ENCODE measurements at regions of chr2 and their contacts with region 1.

Region 1: DNA sequence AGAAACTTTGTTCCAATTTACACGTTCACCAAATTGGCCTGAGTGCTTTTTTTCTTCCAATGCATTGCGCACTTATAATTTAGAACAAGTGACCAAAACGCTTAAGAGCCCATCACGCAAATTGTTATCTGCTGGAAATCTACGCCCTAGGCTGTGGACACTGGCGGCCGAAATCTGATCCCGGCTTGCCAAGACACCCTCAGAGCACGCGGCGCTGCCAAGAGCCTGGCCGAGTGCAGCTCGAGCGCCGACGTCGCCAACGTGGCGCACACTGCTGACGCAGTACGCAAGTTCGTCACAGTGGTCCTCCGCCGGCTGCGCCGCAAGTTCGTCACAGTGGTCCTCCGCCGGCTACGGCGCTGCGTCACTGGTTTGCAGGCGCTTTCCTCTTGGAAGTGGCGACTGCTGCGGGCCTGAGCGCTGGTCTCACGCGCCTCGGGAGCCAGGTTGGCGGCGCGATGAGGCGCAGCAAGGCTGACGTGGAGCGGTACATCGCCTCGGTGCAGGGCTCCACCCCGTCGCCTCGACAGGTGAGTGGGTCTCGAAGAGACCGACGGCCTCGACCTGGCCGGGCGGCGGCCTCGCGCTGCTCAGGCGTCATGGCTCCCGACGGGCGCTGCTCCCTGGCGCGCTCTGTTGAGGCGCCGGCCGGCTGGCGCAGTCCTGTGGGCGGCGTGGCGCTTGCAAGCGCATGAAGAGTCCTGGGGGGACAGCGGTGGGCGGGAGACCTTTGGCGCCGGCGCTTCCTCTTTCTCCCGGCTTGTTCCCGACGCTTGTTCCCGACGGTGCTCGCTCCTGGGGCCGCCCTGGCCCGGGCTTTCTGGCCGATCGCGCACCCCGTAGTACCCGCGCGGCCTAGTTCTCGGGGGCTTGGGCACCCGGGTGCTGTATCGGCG is at the start of gene RANBP2:
- DNase-seq: peak; percentile 91
- H3K4me3 Mint-ChIP-seq: peak within 1 kb of the TSS; percentile 91
- H3K27ac Mint-ChIP-seq: peak within 1 kb of the TSS; percentile 99
- H3K4me1 Mint-ChIP-seq: peaks cover 12% of the 10 kb centered on the region
- H3K27me3 Mint-ChIP-seq: no peaks in the 10 kb centered on the region
- total RNA-seq, gene RANBP2: 70.0 and 72.4 TPM in 2 replicates

Region 2: DNA sequence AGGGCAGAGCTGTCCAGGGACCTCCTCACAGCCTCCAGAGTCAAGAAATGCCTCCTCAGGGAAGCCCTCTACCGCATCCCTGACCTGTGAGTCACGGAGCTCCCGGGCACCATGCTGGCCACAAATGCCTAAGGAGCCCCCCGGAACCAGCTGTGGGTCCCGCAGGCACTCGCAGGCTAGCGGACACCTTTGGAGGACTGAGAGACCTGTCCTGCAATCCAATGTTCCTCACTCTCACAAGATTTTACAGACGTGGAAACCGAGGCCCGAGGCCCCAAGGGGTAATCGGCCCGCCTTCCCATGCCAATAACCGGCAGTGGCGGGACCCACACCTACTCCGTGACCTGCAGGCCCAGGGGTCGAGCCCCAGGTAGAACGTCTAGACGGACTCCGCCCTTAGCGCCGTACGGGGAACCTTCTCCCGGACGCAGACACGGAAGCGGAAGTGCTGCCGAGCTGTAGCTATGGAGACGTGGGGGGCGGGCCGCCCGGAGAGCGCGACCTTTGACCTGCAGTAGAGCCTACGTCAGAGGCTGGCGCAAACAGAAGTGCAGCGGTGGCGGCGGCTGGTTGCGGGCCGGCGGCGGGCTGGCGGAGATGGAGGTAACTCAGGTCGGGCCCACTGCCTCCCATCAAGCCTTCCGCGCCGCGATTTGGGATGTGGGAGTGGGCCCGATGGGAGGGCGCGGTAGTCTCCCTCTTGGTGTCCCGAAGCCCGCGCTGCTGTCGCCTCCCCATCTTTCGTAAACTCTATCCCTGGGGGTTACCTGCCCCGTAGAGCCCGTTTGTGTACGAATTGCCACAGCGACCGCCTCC is 270.5 kb before region 1 on chr2 and contains the start of gene GCC2:
- intact Hi-C with region 1: loop called (anchors 1 kb)
- DNase-seq: peak; percentile 94
- H3K4me3 Mint-ChIP-seq: peak within 1 kb of the TSS; percentile 93
- H3K27ac Mint-ChIP-seq: peak within 1 kb of the TSS; percentile 95
- H3K4me1 Mint-ChIP-seq: peaks cover 39% of the 10 kb centered on the region
- H3K27me3 Mint-ChIP-seq: no peaks in the 10 kb centered on the region
- total RNA-seq, gene GCC2: 38.8 and 42.7 TPM in 2 replicates

Region 3: DNA sequence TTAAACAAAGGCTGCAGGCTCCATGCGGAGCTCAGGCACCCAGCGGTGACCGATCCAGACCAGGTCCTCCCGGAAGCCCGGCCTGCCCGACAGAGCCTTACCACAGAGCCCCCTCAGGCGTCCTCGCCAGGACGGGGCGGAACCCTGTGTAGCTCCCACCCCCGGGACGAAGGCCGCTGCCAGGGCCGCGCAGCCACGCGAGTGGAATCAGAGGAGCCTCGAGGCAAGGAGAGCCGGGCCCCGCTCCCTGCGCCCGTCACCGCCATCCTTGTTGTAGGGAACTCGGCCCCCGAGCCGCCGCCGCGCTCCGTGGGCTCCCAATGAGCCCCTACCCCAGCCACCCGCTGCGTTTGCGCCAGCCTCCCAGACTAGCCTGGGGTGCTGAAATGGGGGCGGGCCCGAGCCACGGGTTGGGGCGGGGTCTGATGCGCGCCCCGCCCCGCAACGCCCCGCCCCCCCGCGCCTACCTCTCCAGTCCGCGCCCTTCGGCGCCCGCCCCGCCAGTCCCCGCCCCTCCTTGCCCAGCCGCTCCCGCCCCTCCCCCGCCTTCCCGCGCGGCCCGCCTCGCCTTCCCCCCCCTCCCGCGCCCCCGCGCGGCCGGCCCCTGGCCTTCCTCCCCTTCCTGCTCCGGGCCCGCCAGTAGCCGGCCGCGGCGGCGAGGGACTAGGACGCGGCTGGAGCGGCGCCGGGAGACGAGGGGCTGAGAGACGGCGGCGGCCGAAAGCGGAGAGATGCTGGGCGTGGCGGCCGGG is 185.4 kb before region 1 on chr2 and contains the start of gene LIMS1:
- intact Hi-C with region 1: loop called (anchors 5 kb)
- DNase-seq: peak; percentile 77
- H3K4me3 Mint-ChIP-seq: peak within 1 kb of the TSS; percentile 96
- H3K27ac Mint-ChIP-seq: peak within 1 kb of the TSS; percentile 97
- H3K4me1 Mint-ChIP-seq: peaks cover 52% of the 10 kb centered on the region
- H3K27me3 Mint-ChIP-seq: no peaks in the 10 kb centered on the region
- total RNA-seq, gene LIMS1: 48.4 and 49.1 TPM in 2 replicates

Region 4: DNA sequence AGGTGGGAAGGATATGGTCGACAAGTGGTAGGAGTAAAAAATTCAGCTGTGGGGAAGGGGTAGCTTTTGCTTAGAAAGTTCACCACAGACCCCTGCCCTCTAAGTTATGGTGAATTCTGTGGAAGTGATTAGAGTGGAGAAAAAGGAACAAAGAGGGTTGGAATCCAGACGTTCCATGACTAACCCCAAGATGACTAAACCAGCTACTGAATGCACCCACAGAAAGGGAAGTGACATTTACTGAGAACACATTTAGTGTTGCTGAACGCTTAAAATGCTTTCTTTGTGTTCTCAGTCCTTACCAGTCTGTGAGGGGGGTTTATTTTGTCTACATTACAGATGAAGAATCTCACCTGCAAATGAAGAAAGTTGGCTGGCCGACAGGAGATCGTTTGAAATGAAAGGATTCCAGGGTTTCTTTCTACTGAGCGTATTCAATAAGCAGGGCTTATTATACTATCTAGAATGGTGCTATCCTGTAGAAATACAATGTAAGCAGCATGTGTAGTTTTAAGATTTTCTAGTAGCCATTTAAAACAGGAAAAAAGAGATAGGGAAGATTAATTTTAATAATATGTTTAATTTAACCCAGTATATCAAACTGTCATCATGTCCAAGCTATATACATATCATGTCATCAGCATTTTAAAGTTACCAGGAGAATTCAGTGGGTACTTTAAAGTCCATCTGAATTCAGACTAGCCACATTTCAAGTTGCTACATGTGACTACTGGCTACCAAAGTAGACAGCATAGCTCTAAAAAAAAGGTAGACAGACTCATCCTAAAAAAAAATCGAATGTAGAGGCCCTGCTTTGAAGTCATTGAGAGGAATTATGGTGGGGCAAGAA is 125.0 kb before region 1 on chr2:
- intact Hi-C with region 1: loop called (anchors 2 kb)
- DNase-seq: no peak
- H3K4me3 Mint-ChIP-seq: peak overlapping the region; percentile 75
- H3K27ac Mint-ChIP-seq: peak overlapping the region; percentile 91
- H3K4me1 Mint-ChIP-seq: peaks cover 58% of the 10 kb centered on the region
- H3K27me3 Mint-ChIP-seq: no peaks in the 10 kb centered on the region

Region 5: GRCh38 chr2:108607706-108608301 is 111.6 kb before region 1 on chr2:
- intact Hi-C with region 1: loop called (anchors 5 kb)
- DNase-seq: no peak
- H3K4me3 Mint-ChIP-seq: no peak overlapping the region
- H3K27ac Mint-ChIP-seq: no peak overlapping the region
- H3K4me1 Mint-ChIP-seq: peaks cover 70% of the 10 kb centered on the region
- H3K27me3 Mint-ChIP-seq: no peaks in the 10 kb centered on the region

Region 6: DNA sequence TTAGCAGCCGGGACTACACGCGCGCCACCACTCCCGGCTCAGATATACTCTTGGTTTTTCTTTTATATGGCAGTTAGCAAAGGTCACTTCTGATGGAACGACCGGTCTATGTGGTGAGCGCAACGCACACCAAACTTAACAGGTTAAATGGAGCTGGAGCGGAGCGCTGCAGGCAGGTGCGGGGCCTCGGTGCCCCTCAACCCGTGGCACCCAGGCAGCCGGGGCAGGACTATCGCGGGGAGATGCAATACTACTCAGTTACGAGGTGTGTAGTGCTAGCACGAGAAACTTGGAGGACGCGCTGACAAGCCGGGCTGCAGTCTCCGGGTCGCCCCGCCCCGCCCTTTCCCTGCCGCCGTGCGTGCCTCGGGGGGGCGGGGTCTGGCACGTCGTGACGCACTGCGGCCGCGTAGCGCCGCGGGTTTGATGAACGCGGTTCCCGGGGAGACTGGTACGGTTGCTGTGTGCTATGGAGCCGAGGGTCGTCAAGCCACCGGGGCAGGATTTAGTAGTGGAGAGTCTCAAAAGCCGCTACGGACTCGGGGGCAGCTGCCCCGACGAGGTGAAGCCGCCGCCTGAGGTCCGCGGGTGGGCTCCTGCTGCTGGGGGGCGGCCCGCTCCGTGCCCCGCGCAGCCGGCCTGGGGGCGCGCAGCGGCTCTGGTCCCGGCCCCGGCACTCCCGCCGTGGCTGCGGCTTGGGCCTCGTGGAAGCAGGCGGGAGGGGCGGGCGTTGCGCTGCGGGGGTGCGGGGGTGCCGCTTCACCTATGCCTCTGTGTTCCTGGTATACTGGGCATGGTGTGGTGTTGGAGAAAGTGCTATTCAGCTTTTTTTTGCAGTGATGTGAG is 67.2 kb after region 1 on chr2 and contains the start of gene CCDC138:
- intact Hi-C with region 1: loop called (anchors 2 kb)
- DNase-seq: peak; percentile 89
- H3K4me3 Mint-ChIP-seq: peak within 1 kb of the TSS; percentile 99
- H3K27ac Mint-ChIP-seq: peak within 1 kb of the TSS; percentile 99
- H3K4me1 Mint-ChIP-seq: peaks cover 16% of the 10 kb centered on the region
- H3K27me3 Mint-ChIP-seq: no peaks in the 10 kb centered on the region
- total RNA-seq, gene CCDC138: 13.6 and 14.1 TPM in 2 replicates

Measured in activated T-helper 2 cell treated with anti-CD3 and anti-CD28 coated beads, Interferon-gamma antibody, Interleukin-2, Interleukin-4, amounts not matched to agents 10 μg/mL and 5 μg/mL and 100 μg/mL, durations not matched to agents 14 hours and 24 hours and 36 hours (primary cell).